IMR-90 (cell line): ENCODE measurements at regions of chr10 and their contacts with region 1.

Region 1: GRCh38 chr10:6667679-6668270 is 87.7 kb upstream of the PRKCQ start:
- DNase-seq: peak; percentile 43
- ATAC-seq: peak; percentile 85
- H3K4me3 ChIP-seq: no peak overlapping the region
- H3K27ac ChIP-seq: no peak overlapping the region
- H3K4me1 ChIP-seq: no peaks in the 10 kb centered on the region
- H3K27me3 ChIP-seq: no peaks in the 10 kb centered on the region; the same call in 1 of the 2 replicates
- CTCF ChIP-seq: peak; percentile 52
- POLR2A ChIP-seq: no peak
- RAD21 ChIP-seq: peak; percentile 47

Region 2: GRCh38 chr10:6423004-6423403 is 244.8 kb before region 1 on chr10:
- CTCF ChIA-PET with region 1: interaction called, 3 read pairs
- POLR2A ChIA-PET with region 1: no interaction called
- dilution Hi-C with region 1: no loop called
- in situ Hi-C with region 1: loop called (anchors 5 kb)
- intact Hi-C with region 1: no loop called
- DNase-seq: peak; percentile 2
- ATAC-seq: peak; percentile 53
- H3K4me3 ChIP-seq: no peak overlapping the region
- H3K27ac ChIP-seq: no peak overlapping the region
- H3K4me1 ChIP-seq: no peaks in the 10 kb centered on the region
- H3K27me3 ChIP-seq: peaks cover 12% of the 10 kb centered on the region
- CTCF ChIP-seq: no peak
- POLR2A ChIP-seq: no peak
- RAD21 ChIP-seq: no peak

Region 3: GRCh38 chr10:7687228-7687907 is 1019.6 kb after region 1 on chr10:
- CTCF ChIA-PET with region 1: no interaction called
- POLR2A ChIA-PET with region 1: no interaction called
- dilution Hi-C with region 1: no loop called
- in situ Hi-C with region 1: no loop called
- intact Hi-C with region 1: loop called (anchors 2 kb)
- DNase-seq: peak; percentile 85
- ATAC-seq: peak; percentile 96
- H3K4me3 ChIP-seq: no peak overlapping the region
- H3K27ac ChIP-seq: no peak overlapping the region
- H3K4me1 ChIP-seq: no peaks in the 10 kb centered on the region
- H3K27me3 ChIP-seq: no peaks in the 10 kb centered on the region; the same call in 1 of the 2 replicates
- CTCF ChIP-seq: peak; percentile 85
- POLR2A ChIP-seq: no peak
- RAD21 ChIP-seq: peak; percentile 70